Gastrocnemius medialis (tissue), 4 donors: ENCODE measurements at regions of chr11 and their contacts with region 1.

Region 1: GRCh38 chr11:6353367-6353987 is 33.2 kb upstream of the CAVIN3 start:
- DNase-seq: peak; percentile 18 to 39
- ATAC-seq: peak; percentile 21 to 68
- H3K4me3 ChIP-seq: no peak overlapping the region
- H3K27ac ChIP-seq: no peak overlapping the region
- H3K4me1 ChIP-seq: peaks cover 0 to 3% of the 10 kb centered on the region in 2 donors
- H3K27me3 ChIP-seq: no peaks in the 10 kb centered on the region
- CTCF ChIP-seq: peak; percentile 79 to 96 (median 94)
- POLR2A ChIP-seq: no peak

Region 2: GRCh38 chr11:5123802-5124521 is 1229.5 kb before region 1 on chr11:
- in situ Hi-C with region 1: no loop called
- intact Hi-C with region 1: loop called (anchors 5 kb)
- DNase-seq: peak; percentile 6 to 25
- ATAC-seq: peak in 1 of 2 donors; percentile 60
- H3K4me3 ChIP-seq: no peak overlapping the region
- H3K27ac ChIP-seq: no peak overlapping the region
- H3K4me1 ChIP-seq: no peaks in the 10 kb centered on the region
- H3K27me3 ChIP-seq: no peaks in the 10 kb centered on the region
- CTCF ChIP-seq: peak in 4 of 5 experiments; percentile 40 to 66 (median 58)
- POLR2A ChIP-seq: no peak

Region 3: GRCh38 chr11:5992604-5993251 is 360.7 kb before region 1 on chr11:
- in situ Hi-C with region 1: no loop called
- intact Hi-C with region 1: loop called (anchors 2 kb)
- DNase-seq: no peak
- ATAC-seq: no peak
- H3K4me3 ChIP-seq: no peak overlapping the region
- H3K27ac ChIP-seq: no peak overlapping the region
- H3K4me1 ChIP-seq: no peaks in the 10 kb centered on the region
- H3K27me3 ChIP-seq: no peaks in the 10 kb centered on the region
- CTCF ChIP-seq: peak in 2 of 5 experiments; percentile 19 to 41
- POLR2A ChIP-seq: no peak

Region 4: GRCh38 chr11:6203327-6203726 is 150.2 kb before region 1 on chr11:
- in situ Hi-C with region 1: no loop called
- intact Hi-C with region 1: no loop called
- DNase-seq: no peak
- ATAC-seq: no peak
- H3K4me3 ChIP-seq: no peak overlapping the region
- H3K27ac ChIP-seq: no peak overlapping the region
- H3K4me1 ChIP-seq: no peaks in the 10 kb centered on the region
- H3K27me3 ChIP-seq: no peaks in the 10 kb centered on the region
- CTCF ChIP-seq: no peak
- POLR2A ChIP-seq: no peak

Region 5: DNA sequence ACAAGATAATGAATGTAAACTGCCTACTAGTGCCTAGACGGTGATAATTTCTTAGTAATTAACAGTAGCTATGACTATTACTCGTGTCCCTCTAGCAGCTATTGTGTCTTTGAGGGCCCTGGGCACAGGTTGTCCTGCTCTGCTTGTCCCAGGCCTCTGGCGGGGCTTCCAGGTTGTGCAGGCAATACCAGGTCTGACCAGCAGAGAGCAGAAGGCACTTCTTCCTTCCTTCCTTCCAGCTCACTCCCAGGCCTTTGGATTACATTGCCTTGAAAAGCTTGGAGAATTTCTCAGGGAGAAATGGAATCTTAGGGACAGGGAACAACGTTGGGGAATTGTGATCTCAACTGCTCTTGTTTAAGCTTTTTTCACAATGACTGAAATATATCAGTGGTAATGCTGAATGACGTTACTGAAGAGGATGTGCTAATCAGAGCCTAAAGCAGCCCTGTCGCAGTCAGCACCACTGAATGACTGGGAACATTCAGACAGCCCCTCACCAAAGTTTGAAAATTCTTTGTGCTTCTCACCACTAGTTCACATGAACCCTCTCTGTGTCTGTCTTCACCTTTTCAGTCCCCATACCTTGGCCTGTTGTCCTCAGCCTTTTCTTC is 102.2 kb before region 1 on chr11:
- in situ Hi-C with region 1: loop called (anchors 5 to 25 kb)
- intact Hi-C with region 1: loop called (anchors 1 kb)
- DNase-seq: peak in 1 of 2 donors; percentile 59
- ATAC-seq: peak; percentile 76 to 94
- H3K4me3 ChIP-seq: no peak overlapping the region
- H3K27ac ChIP-seq: no peak overlapping the region
- H3K4me1 ChIP-seq: no peaks in the 10 kb centered on the region
- H3K27me3 ChIP-seq: no peaks in the 10 kb centered on the region
- CTCF ChIP-seq: peak; percentile 69 to 92 (median 77)
- POLR2A ChIP-seq: no peak

Region 6: DNA sequence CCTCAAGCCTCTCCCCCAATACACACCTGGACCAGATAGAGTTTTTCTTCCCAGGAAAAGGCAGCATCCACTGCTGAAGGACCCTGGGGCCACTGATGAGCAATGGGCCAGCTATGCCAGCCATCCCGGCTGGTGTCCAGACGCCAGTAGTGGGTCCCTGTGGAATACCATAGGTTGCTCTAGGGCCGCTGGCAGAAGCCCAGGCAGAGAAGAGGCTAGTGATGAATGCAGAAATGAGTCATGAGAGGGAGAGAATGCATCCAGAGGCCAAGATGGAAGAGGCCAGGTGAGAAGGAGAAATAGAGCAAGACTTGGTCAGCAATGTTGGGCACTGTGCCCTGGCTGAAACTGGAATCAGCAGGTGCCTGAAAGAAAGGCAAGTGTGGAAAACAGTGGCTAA is 78.4 kb after region 1 on chr11:
- in situ Hi-C with region 1: no loop called
- intact Hi-C with region 1: no loop called
- DNase-seq: no peak
- ATAC-seq: no peak
- H3K4me3 ChIP-seq: no peak overlapping the region
- H3K27ac ChIP-seq: no peak overlapping the region
- H3K4me1 ChIP-seq: no peaks in the 10 kb centered on the region
- H3K27me3 ChIP-seq: no peaks in the 10 kb centered on the region
- CTCF ChIP-seq: no peak
- POLR2A ChIP-seq: no peak

Region 7: GRCh38 chr11:6443269-6444003 is 90.0 kb after region 1 on chr11:
- in situ Hi-C with region 1: no loop called
- intact Hi-C with region 1: no loop called
- DNase-seq: peak; percentile 10 to 33
- ATAC-seq: peak; percentile 50 to 88
- H3K4me3 ChIP-seq: no peak overlapping the region
- H3K27ac ChIP-seq: no peak overlapping the region
- H3K4me1 ChIP-seq: no peaks in the 10 kb centered on the region
- H3K27me3 ChIP-seq: no peaks in the 10 kb centered on the region
- CTCF ChIP-seq: peak; percentile 62 to 81 (median 71)
- POLR2A ChIP-seq: no peak

Region 8: GRCh38 chr11:6862961-6863360 is 509.5 kb after region 1 on chr11 and contains the start of gene OR10A2:
- in situ Hi-C with region 1: no loop called
- intact Hi-C with region 1: no loop called
- DNase-seq: no peak
- ATAC-seq: no peak
- H3K4me3 ChIP-seq: no peak within 1 kb of the TSS
- H3K27ac ChIP-seq: no peak within 1 kb of the TSS
- H3K4me1 ChIP-seq: no peaks in the 10 kb centered on the region
- H3K27me3 ChIP-seq: no peaks in the 10 kb centered on the region
- CTCF ChIP-seq: no peak
- POLR2A ChIP-seq: no peak
- total RNA-seq, gene OR10A2: not detected